Caco-2 (cell line): ENCODE measurements at regions of chr17 and their contacts with region 1.

Region 1: GRCh38 chr17:67475236-67475937 is 98.3 kb downstream of the PITPNC1 start:
- DNase-seq: peak; percentile 47 to 71
- H3K4me3 ChIP-seq: no peak overlapping the region
- H3K4me3 Mint-ChIP-seq: no peak overlapping the region
- H3K27ac Mint-ChIP-seq: no peak overlapping the region
- H3K4me1 ChIP-seq: no peaks in the 10 kb centered on the region
- H3K4me1 Mint-ChIP-seq: no peaks in the 10 kb centered on the region
- H3K27me3 ChIP-seq: no peaks in the 10 kb centered on the region
- H3K27me3 Mint-ChIP-seq: no peaks in the 10 kb centered on the region
- CTCF ChIP-seq: peak; percentile 78 to 86

Region 2: GRCh38 chr17:67386965-67387551 is 88.3 kb before region 1 on chr17:
- CTCF ChIA-PET with region 1: no interaction called
- POLR2A ChIA-PET with region 1: no interaction called
- intact Hi-C with region 1: loop called (anchors 1 kb)
- DNase-seq: peak; percentile 58 to 77
- H3K4me3 ChIP-seq: no peak overlapping the region
- H3K4me3 Mint-ChIP-seq: no peak overlapping the region
- H3K27ac Mint-ChIP-seq: no peak overlapping the region
- H3K4me1 ChIP-seq: no peaks in the 10 kb centered on the region
- H3K4me1 Mint-ChIP-seq: peaks cover 8% of the 10 kb centered on the region
- H3K27me3 ChIP-seq: no peaks in the 10 kb centered on the region
- H3K27me3 Mint-ChIP-seq: no peaks in the 10 kb centered on the region
- CTCF ChIP-seq: peak; percentile 60 to 93

Region 3: DNA sequence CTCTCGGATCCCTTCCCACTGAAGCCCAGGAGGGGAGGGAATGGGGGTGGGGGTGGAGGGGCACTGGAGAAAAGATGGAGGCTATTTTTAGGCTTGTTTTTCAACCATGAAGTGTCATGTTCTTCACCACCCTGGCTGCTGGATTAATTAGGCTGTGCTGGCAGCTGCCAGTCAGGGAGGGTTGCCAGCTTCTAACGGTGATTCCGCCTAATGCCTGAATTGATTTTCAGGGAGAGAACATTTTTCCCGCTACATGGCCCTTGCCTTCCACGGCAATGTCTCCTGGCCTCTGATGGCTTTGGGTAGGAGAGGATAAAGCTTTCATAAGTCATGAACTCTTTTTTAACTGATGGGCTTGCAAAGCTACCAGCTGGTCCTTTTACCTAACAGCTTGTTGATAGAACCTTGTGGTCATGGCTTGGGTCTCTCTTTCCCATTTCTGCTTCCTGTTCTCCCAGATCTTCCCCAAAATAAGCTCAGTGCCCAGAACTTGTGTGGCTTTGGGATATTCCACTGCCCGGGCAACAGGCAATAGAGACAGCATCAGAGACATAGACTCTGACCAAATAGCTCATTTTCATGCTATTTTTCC is 69.1 kb after region 1 on chr17:
- CTCF ChIA-PET with region 1: no interaction called
- POLR2A ChIA-PET with region 1: no interaction called
- intact Hi-C with region 1: no loop called
- DNase-seq: no peak
- H3K4me3 ChIP-seq: no peak overlapping the region
- H3K4me3 Mint-ChIP-seq: no peak overlapping the region
- H3K27ac Mint-ChIP-seq: no peak overlapping the region
- H3K4me1 ChIP-seq: no peaks in the 10 kb centered on the region
- H3K4me1 Mint-ChIP-seq: no peaks in the 10 kb centered on the region
- H3K27me3 ChIP-seq: no peaks in the 10 kb centered on the region
- H3K27me3 Mint-ChIP-seq: no peaks in the 10 kb centered on the region
- CTCF ChIP-seq: no peak

Region 4: DNA sequence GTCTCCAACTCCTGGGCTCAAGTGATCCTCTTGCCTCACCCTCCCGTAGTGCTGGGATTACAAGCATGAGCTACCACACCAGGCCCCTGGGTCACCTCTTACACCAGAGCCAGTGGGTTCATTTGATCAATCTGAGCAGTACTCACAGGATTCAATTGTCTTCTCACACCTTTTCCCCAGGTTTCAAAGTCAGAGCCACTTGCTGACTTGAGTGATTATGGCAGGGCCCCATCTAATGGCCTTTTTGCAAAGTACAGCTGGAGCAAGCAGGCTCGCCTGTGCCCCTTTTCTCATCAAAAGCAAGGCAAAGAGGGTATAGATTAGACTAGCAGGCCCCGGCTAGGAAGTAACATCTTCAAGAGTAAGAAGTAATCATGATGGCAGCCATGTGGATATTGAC is 127.6 kb after region 1 on chr17:
- CTCF ChIA-PET with region 1: no interaction called
- POLR2A ChIA-PET with region 1: no interaction called
- intact Hi-C with region 1: loop called (anchors 10 kb)
- DNase-seq: peak; percentile 55 to 61
- H3K4me3 ChIP-seq: no peak overlapping the region
- H3K4me3 Mint-ChIP-seq: no peak overlapping the region
- H3K27ac Mint-ChIP-seq: no peak overlapping the region
- H3K4me1 ChIP-seq: no peaks in the 10 kb centered on the region
- H3K4me1 Mint-ChIP-seq: peaks cover 7% of the 10 kb centered on the region
- H3K27me3 ChIP-seq: no peaks in the 10 kb centered on the region
- H3K27me3 Mint-ChIP-seq: peaks cover 5% of the 10 kb centered on the region
- CTCF ChIP-seq: peak; percentile 46 to 74

Region 5: DNA sequence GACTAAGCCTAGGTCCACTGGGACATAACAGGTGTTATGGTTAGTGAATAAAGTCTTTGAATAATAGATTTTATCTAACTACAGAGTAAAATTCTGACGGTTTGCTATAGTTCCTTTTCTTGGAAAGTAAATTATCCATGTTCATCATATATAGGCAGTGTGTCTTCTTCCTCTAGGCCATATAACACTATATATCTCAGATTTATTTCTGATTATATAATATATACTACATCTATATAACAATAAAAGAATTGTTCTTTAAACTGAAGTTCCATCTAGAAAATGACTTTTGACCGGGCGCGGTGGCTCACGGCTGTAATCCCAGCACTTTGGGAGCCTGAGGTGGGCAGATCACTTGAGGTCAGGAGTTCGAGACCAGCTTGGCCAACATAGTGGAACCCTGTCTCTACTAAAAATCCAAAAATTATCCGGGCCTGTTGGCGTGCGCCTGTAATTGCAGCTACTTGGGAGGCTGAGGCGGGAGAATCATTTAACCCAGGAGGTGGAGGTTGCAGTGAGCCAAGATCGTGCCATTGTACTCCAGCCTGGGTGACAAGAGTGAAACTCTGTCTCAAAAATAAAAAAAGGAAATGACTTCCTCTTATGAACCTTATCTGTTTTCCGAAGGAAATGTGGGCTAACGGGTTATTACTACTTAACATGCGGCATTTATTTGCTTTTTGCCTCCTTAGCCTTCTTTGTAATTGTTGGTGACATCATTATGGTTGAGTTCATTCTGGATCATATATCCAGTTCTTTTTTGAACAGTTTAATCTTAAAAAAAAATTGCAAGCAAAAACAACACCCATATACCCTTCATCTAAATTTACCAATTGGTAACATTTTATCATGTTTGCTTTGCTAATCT is 271.6 kb after region 1 on chr17:
- CTCF ChIA-PET with region 1: no interaction called
- POLR2A ChIA-PET with region 1: no interaction called
- intact Hi-C with region 1: no loop called
- DNase-seq: no peak
- H3K4me3 ChIP-seq: no peak overlapping the region
- H3K4me3 Mint-ChIP-seq: no peak overlapping the region
- H3K27ac Mint-ChIP-seq: no peak overlapping the region
- H3K4me1 ChIP-seq: no peaks in the 10 kb centered on the region
- H3K4me1 Mint-ChIP-seq: no peaks in the 10 kb centered on the region
- H3K27me3 ChIP-seq: no peaks in the 10 kb centered on the region
- H3K27me3 Mint-ChIP-seq: no peaks in the 10 kb centered on the region
- CTCF ChIP-seq: no peak